ENCODE measurements at regions of chr11 and their contacts with region 1.

Region 1: GRCh38 chr11:45110562-45110961 is 35.9 kb upstream of the PRDM11 start:
- DNase-seq: no peak
- H3K4me3 ChIP-seq: no peak overlapping the region
- H3K27ac ChIP-seq: no peak overlapping the region
- H3K4me1 ChIP-seq: peaks cover 0 to 7% (median 5%) of the 10 kb centered on the region in 6 donors
- H3K27me3 ChIP-seq: peaks cover 0 to 32% (median 5%) of the 10 kb centered on the region in 7 donors
- CTCF ChIP-seq: peak; percentile 36 to 88 (median 80)
- POLR2A ChIP-seq: no peak

Region 2: GRCh38 chr11:45294499-45294898 is 183.9 kb after region 1 on chr11:
- intact Hi-C with region 1: loop called (anchors 2 kb)
- DNase-seq: no peak
- H3K4me3 ChIP-seq: no peak overlapping the region
- H3K27ac ChIP-seq: no peak overlapping the region
- H3K4me1 ChIP-seq: no peaks in the 10 kb centered on the region
- H3K27me3 ChIP-seq: peaks cover 0 to 34% (median 2%) of the 10 kb centered on the region in 7 donors
- CTCF ChIP-seq: no peak
- POLR2A ChIP-seq: no peak

Region 3: DNA sequence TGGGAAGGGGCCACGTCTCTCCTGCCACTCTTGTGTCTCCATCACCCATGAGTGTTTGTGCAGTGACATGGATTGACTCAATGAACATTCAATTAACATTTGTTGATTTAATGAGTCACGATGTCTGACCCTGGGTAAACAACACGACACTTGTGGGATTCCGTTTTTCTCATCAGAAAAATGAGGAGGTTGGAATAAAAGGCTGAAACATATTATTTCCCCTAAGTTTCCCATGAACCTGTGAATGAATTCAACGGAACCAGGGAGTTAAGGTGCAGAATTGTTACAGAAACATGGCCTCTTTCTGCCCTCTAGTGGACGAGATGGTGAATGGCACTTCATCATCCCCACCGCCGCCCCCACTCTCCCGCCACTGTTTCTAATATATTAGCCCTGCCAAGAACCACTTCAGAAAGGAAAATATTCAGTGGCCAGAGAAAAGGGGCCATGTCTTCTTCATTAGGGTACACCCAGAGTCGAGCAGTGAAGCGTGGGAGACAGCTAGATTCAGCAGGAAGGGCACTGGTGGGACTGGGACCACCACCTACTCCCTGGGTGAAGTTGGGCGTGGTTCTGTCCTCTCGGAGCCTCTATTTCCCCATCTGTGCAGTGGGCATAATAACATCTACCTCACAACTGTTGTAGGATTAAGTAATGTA is 221.8 kb after region 1 on chr11:
- intact Hi-C with region 1: loop called (anchors 2 kb)
- DNase-seq: no peak
- H3K4me3 ChIP-seq: peak overlapping the region in 2 of 8 donors; percentile 5 to 41
- H3K27ac ChIP-seq: peak overlapping the region in 7 of 8 donors; percentile 45 to 77 (median 67)
- H3K4me1 ChIP-seq: peaks cover 0 to 12% (median 7%) of the 10 kb centered on the region in 6 donors
- H3K27me3 ChIP-seq: peaks cover 0 to 7% (median 0%) of the 10 kb centered on the region in 7 donors
- CTCF ChIP-seq: peak; percentile 17 to 92 (median 80)
- POLR2A ChIP-seq: no peak

Measured in spleen (tissue), 13 donors.